ENCODE measurements at regions of chr9 and their contacts with region 1.

Region 1: DNA sequence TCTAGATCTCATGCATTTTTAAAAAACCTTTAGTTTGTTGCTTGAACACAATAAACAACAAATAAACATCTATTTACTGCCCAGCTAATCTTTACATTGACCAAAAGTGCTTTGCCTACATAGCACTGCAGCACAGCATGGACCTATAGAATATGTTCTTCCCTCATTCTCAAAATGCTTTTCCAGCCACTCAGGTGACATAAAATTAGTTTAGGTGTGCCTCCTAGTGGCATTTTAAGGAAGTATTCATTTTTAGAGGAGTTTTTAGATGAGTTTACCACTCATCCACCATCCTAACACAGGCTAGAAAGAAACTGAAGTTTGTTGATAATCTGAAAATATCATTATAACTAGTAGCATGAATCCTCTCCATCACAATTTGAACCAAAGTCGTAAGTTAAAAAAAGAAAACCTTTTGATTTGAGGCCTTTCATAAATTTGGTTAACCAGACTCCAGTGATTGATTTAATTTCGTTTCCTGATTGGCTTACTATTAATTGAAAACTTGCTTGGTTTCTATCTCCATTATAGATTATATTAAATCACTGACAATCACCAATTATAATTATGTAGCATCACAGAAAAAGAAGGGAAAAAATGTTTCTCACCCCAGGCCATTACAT is 12.6 kb downstream of the PLGRKT start:
- DNase-seq: no peak
- H3K4me3 Mint-ChIP-seq: no peak overlapping the region
- H3K27ac Mint-ChIP-seq: no peak overlapping the region
- H3K4me1 Mint-ChIP-seq: peaks cover 21% of the 10 kb centered on the region
- H3K27me3 Mint-ChIP-seq: no peaks in the 10 kb centered on the region

Region 2: GRCh38 chr9:4762108-4762885 is 662.8 kb before region 1 on chr9:
- intact Hi-C with region 1: loop called (anchors 1 kb)
- DNase-seq: peak; percentile 72
- H3K4me3 Mint-ChIP-seq: peak overlapping the region; percentile 68
- H3K27ac Mint-ChIP-seq: peak overlapping the region; percentile 65
- H3K4me1 Mint-ChIP-seq: peaks cover 18% of the 10 kb centered on the region
- H3K27me3 Mint-ChIP-seq: no peaks in the 10 kb centered on the region

Region 3: DNA sequence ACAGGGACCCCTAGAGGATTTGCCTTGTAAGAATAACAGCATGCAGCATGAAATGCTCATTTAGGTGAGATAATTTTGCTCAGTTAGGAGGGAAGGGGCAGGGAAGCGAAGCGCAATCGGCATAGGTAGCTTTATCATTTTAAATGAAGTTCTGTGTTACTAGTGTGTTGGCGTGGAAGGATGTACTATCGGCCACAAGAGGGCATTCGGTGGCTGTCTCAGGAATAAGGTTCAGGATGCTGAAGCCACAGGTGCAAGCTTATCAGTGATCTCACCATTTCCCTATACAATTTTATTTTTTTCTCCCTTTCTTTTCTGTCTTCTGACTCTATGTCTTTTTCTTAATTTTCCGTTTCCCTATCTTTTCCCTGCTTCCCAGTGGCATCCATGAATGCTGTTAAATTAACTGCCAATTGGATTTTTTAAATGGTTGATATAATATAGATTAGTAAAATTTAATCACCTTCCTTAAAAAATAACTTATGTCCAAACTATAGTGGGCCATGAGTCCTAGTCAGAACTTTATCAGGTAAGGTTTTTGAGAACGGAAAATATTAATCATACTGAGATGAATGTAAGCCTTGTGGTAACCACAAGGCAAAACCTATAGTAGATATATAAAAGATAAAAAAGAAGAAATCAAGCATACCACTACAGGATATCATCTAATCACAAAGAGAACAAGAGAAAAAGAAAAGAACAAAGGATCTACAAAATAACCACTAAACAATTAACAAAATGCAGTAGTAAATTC is 238.5 kb before region 1 on chr9:
- intact Hi-C with region 1: loop called (anchors 1 kb)
- DNase-seq: peak; percentile 46
- H3K4me3 Mint-ChIP-seq: no peak overlapping the region
- H3K27ac Mint-ChIP-seq: no peak overlapping the region
- H3K4me1 Mint-ChIP-seq: peaks cover 24% of the 10 kb centered on the region
- H3K27me3 Mint-ChIP-seq: no peaks in the 10 kb centered on the region

Region 4: DNA sequence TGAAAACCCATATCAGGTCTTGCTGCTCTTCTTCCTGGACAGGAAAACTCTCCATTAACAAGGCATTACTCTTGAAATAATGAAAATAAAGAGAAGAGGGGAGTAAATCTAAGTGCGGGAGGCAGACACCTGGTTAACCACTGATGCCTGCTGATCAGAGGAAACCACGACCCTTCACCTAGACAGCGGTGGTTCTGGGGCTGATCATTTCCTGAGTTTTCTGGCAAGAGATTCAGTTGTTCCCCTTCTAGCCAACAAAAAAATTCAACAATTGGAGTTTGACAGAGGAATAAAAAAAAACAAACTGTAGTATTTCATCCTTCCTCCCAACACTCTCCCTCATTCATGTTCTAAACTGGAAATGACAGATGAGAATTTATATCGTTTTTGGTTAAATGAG is 123.6 kb before region 1 on chr9:
- intact Hi-C with region 1: loop called (anchors 10 kb)
- DNase-seq: no peak
- H3K4me3 Mint-ChIP-seq: no peak overlapping the region
- H3K27ac Mint-ChIP-seq: no peak overlapping the region
- H3K4me1 Mint-ChIP-seq: peaks cover 14% of the 10 kb centered on the region
- H3K27me3 Mint-ChIP-seq: no peaks in the 10 kb centered on the region

Region 5: DNA sequence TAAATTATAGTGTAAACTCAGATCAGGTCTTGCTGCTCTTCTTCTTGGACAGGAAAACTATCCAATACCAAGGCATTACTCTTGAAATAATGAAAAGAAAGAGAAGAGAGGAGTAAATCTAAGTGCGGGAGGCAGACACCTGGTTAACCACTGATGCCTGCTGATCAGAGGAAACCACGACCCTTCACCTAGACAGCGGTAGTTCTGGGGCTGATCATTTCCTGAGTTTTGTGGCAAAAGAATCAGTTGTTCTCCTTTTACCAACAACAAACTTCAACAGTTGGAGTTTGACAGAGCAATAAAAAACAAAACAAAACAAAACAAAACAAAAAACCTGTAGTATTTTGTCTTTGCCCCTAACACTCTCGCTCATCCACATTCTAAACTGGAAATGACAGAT is 88.4 kb before region 1 on chr9:
- intact Hi-C with region 1: loop called (anchors 5 kb)
- DNase-seq: peak; percentile 23
- H3K4me3 Mint-ChIP-seq: no peak overlapping the region
- H3K27ac Mint-ChIP-seq: no peak overlapping the region
- H3K4me1 Mint-ChIP-seq: peaks cover 36% of the 10 kb centered on the region
- H3K27me3 Mint-ChIP-seq: no peaks in the 10 kb centered on the region

Region 6: GRCh38 chr9:5364294-5365024 is 60.7 kb before region 1 on chr9:
- intact Hi-C with region 1: loop called (anchors 10 kb)
- DNase-seq: no peak
- H3K4me3 Mint-ChIP-seq: no peak overlapping the region
- H3K27ac Mint-ChIP-seq: peak overlapping the region; percentile 14
- H3K4me1 Mint-ChIP-seq: peaks cover 20% of the 10 kb centered on the region
- H3K27me3 Mint-ChIP-seq: no peaks in the 10 kb centered on the region

Region 7: GRCh38 chr9:5596173-5596572 is 171.1 kb after region 1 on chr9:
- intact Hi-C with region 1: loop called (anchors 1 kb)
- DNase-seq: no peak
- H3K4me3 Mint-ChIP-seq: no peak overlapping the region
- H3K27ac Mint-ChIP-seq: no peak overlapping the region
- H3K4me1 Mint-ChIP-seq: peaks cover 29% of the 10 kb centered on the region
- H3K27me3 Mint-ChIP-seq: no peaks in the 10 kb centered on the region

Measured in activated T-helper 1 cell treated with anti-CD3 and anti-CD28 coated beads, Interleukin-12 subunit alpha, Interleukin-12 subunit beta, Interleukin-2, Interleukin-4 antibody, amounts not matched to agents 30 ng/mL and 10 ng/mL and 1 ng/mL, durations not matched to agents 14 hours and 24 hours and 36 hours (primary cell).